Right ventricle myocardium inferior (tissue), 1 donor: ENCODE measurements at regions of chr11 and their contacts with region 1.

Region 1: GRCh38 chr11:86671682-86672621 is at the start of gene ME3:
- DNase-seq: peak; percentile 88
- ATAC-seq: peak; percentile 77
- total RNA-seq, gene ME3: 28.9 TPM

Region 2: GRCh38 chr11:86592659-86593451 is 79.1 kb before region 1 on chr11:
- intact Hi-C with region 1: no loop called
- DNase-seq: peak; percentile 45
- ATAC-seq: no peak

Region 3: GRCh38 chr11:86629045-86629706 is 42.8 kb before region 1 on chr11:
- intact Hi-C with region 1: loop called (anchors 5 kb)
- DNase-seq: no peak
- ATAC-seq: peak; percentile 65

Region 4: GRCh38 chr11:86719781-86720463 is 48.0 kb after region 1 on chr11:
- intact Hi-C with region 1: no loop called
- DNase-seq: no peak
- ATAC-seq: no peak

Region 5: DNA sequence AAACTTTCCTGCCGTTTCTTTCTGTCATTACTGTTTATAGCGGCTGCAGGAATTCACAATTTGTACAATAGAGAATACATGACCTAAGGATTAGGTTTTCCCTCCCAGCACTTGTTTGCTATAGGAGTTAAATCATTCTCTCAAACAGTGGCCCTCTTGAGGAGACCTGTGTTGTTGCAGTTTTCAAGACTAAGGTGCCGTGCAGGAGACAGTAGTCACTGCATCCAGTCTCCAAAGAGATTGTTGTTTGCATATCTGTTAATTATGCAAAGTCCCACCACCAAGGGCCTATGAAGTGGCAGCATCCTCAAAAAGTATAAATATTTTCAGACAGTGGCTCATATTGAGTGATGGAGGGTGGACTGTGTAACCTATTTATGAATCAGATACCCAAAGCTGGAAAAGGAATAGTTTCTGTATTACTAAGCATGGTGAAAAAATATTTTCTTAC is 130.7 kb after region 1 on chr11:
- intact Hi-C with region 1: loop called (anchors 5 kb)
- DNase-seq: no peak
- ATAC-seq: no peak